OCI-LY7 (cell line): ENCODE measurements at regions of chr1 and their contacts with region 1.

Region 1: GRCh38 chr1:165603810-165604209 is 27.2 kb upstream of the MGST3 start:
- DNase-seq: no peak
- H3K4me3 ChIP-seq: no peak overlapping the region
- H3K27ac ChIP-seq: no peak overlapping the region
- H3K4me1 ChIP-seq: peaks cover 23% of the 10 kb centered on the region
- CTCF ChIP-seq: no peak

Region 2: GRCh38 chr1:165403835-165404482 is 199.9 kb before region 1 on chr1:
- CTCF ChIA-PET with region 1: no interaction called
- POLR2A ChIA-PET with region 1: no interaction called
- intact Hi-C with region 1: no loop called
- DNase-seq: peak; percentile 22
- H3K4me3 ChIP-seq: no peak overlapping the region
- H3K27ac ChIP-seq: no peak overlapping the region
- H3K4me1 ChIP-seq: no peaks in the 10 kb centered on the region
- CTCF ChIP-seq: peak; percentile 75

Region 3: DNA sequence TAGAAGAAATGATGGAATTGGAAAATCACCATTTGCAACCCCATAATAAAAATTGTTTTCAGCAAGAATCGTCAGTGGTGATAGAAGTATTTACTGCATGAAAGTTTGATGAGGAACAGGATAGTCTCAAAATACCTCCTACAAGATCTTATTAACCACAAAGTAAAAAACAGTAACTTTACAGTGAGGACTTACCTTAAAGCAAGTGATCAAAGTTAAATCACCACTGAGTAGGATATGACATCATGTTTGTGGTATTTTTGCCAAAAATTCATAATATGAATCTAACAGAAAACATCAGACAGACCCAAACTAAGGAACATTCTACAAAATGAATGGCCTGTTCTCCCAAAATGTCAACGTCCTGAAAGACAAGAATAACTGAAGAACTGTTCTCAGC is 74.7 kb after region 1 on chr1:
- CTCF ChIA-PET with region 1: no interaction called
- POLR2A ChIA-PET with region 1: no interaction called
- intact Hi-C with region 1: loop called (anchors 2 kb)
- DNase-seq: no peak
- H3K4me3 ChIP-seq: no peak overlapping the region
- H3K27ac ChIP-seq: no peak overlapping the region
- H3K4me1 ChIP-seq: no peaks in the 10 kb centered on the region
- CTCF ChIP-seq: no peak